Sigmoid colon (tissue), 7 donors: ENCODE measurements at regions of chr3 and their contacts with region 1.

Region 1: DNA sequence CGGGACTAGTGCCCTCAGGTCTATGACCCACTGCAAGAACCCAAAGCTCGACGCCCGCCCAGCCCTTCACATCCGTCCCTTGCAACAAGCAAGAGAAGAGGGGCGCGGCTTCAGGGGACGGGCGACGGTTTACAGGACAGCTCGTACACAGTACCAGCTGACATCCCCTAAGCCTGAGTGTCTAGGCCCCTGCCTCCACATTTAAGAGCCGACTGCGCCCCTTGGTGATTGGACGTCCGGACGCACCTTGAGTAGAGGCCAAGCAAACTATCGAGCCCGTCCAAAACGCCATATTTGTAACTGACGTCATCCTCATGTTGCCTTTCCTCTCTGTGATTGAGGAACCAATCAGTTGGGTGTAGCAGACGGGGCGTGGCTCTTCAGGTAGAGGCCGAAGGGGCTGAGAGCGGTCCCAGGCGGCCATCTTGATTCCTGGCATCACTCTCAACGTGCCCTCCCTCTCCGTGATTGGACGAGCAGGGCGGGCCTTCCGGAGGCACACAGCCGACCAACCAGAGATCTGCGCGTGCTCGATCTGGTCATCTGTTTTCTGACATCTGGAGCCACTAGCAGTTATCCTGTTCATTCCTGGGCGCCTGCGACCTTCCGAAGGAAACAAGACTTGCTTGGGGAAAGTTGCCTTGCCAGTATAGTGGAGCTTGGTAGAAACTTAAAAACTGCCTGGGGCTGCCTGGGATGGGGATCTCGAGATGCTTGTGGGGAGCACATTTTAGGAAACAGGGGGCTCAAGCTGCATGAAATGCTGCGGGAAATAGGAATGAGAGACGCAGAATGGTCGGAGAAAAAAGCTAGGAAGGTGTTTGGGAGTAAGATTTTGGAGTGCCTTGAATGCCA is 4.0 kb upstream of the RPL14 start:
- DNase-seq: peak; percentile 99
- H3K4me3 ChIP-seq: peak overlapping the region; percentile 39 to 76 (median 54)
- H3K27ac ChIP-seq: peak overlapping the region; percentile 80 to 92 (median 88)
- H3K4me1 ChIP-seq: peaks cover 0 to 30% (median 25%) of the 10 kb centered on the region in 4 donors
- H3K27me3 ChIP-seq: no peaks in the 10 kb centered on the region
- CTCF ChIP-seq: no peak
- EP300 ChIP-seq: peak in 1 of 4 donors; percentile 37
- POLR2A ChIP-seq: peak; percentile 35 to 50

Region 2: DNA sequence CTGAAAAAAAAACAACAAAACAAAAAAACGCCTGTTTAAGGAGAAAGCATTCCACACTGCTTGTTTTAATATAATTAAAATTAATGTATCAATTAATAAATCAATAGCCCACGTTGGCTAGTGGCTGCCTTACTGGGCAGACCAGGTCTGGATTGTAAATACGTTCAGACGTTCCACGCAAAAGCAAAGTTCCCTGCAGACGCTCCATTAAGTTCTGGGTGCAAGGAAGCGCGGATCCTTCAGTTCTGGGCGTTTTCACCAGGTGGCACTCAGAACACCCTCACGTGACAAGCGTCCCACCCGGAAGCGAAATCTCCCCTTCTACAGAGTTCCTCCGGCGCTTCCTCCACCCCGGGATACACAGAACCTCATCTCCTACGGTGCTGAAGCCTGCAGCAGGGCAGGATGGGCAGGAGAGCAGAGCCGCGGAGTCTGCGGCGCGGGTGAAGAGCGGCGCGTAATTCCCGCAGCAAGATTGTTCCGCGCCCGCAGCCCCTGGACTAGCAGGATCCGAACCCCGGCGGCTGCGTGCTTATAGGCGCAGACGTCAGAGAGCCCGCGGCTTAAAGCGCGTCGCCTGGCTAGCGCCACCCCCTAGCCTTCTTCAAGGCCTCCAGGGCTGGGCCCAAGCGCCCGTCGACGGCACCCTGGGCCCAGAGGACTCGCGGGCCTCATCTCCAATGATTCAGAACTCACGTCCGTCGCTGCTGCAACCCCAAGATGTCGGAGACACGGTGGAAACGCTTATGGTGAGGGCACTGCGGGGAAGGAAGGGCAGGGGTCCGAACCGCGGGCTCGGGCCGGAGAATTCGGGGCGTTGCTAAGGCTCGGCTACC is 1069.8 kb before region 1 on chr3 and contains the start of gene SLC25A38:
- intact Hi-C with region 1: loop called (anchors 10 kb)
- DNase-seq: peak; percentile 91
- H3K4me3 ChIP-seq: peak within 1 kb of the TSS; percentile 62 to 90 (median 74)
- H3K27ac ChIP-seq: peak within 1 kb of the TSS; percentile 91 to 98 (median 94)
- H3K4me1 ChIP-seq: peaks cover 0 to 24% (median 21%) of the 10 kb centered on the region in 4 donors
- H3K27me3 ChIP-seq: no peaks in the 10 kb centered on the region
- CTCF ChIP-seq: peak in 2 of 4 experiments; percentile 26 to 33
- EP300 ChIP-seq: no peak
- POLR2A ChIP-seq: peak; percentile 11 to 59
- total RNA-seq, gene SLC25A38: 25.8 to 32.6 (median 27.5) TPM

Region 3: GRCh38 chr3:39870706-39871105 is 582.4 kb before region 1 on chr3:
- intact Hi-C with region 1: no loop called
- DNase-seq: no peak
- H3K4me3 ChIP-seq: no peak overlapping the region
- H3K27ac ChIP-seq: no peak overlapping the region
- H3K4me1 ChIP-seq: no peaks in the 10 kb centered on the region
- H3K27me3 ChIP-seq: no peaks in the 10 kb centered on the region
- CTCF ChIP-seq: no peak
- EP300 ChIP-seq: no peak
- POLR2A ChIP-seq: no peak

Region 4: GRCh38 chr3:40505599-40506462 is 52.7 kb after region 1 on chr3 and contains the start of gene ZNF620:
- intact Hi-C with region 1: loop called (anchors 5 kb)
- DNase-seq: peak; percentile 91
- H3K4me3 ChIP-seq: peak within 1 kb of the TSS; percentile 56 to 72 (median 66)
- H3K27ac ChIP-seq: peak within 1 kb of the TSS; percentile 78 to 80 (median 78)
- H3K4me1 ChIP-seq: peaks cover 0 to 12% (median 4%) of the 10 kb centered on the region in 4 donors
- H3K27me3 ChIP-seq: no peaks in the 10 kb centered on the region
- CTCF ChIP-seq: no peak
- EP300 ChIP-seq: no peak
- POLR2A ChIP-seq: peak; percentile 25 to 33
- total RNA-seq, gene ZNF620: 1.4 to 7.3 (median 4.1) TPM

Region 5: DNA sequence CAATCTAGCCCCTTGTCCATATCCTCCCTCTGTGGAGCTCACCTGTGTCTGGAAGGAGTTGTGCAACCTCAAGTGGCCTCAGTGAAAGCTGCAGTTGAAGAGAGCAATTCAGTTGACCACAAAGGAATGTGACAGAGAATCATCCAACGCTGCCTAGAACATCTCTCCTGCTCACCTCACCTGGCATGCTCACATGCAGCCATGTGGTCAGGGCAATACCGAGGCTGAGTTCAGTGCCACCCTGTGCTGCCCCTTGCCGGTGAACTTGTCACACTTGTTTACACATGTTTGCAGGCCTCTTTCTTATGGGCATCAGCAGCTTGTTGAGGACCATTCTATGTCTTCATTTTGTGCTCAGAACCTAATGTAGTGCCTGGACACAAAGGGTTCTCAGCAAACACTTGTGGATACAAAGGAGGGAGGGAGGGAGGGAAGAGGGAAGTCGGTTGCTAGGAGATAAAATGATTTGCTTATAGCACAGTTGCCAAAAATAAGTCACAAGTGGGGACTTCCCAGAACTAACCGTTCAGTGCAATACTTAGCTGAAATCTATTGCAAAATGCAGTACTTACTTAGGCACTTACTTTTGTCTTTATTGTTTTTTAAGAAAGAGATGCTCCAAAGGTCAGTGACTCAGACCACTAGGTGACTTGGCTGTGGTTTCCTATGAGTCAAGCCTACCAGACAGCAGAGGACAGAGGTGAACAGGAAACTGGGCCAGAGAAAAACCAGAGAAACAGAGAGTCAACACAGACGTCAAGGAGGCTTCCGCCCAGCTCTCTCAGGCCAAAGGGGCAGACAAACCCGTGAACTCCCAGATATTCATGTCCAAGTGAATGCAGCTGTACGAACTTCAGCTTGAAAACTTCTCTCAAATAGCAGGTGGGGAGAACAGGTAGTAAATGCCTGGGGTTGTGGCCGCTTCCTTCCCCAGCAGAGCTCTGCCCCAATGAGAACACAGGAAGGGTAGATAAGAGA is 518.4 kb after region 1 on chr3:
- intact Hi-C with region 1: no loop called
- DNase-seq: peak; percentile 93
- H3K4me3 ChIP-seq: no peak overlapping the region
- H3K27ac ChIP-seq: peak overlapping the region; percentile 53 to 76 (median 70)
- H3K4me1 ChIP-seq: peaks cover 0 to 45% (median 39%) of the 10 kb centered on the region in 4 donors
- H3K27me3 ChIP-seq: no peaks in the 10 kb centered on the region
- CTCF ChIP-seq: no peak
- EP300 ChIP-seq: peak; percentile 31 to 83 (median 69)
- POLR2A ChIP-seq: no peak

Region 6: DNA sequence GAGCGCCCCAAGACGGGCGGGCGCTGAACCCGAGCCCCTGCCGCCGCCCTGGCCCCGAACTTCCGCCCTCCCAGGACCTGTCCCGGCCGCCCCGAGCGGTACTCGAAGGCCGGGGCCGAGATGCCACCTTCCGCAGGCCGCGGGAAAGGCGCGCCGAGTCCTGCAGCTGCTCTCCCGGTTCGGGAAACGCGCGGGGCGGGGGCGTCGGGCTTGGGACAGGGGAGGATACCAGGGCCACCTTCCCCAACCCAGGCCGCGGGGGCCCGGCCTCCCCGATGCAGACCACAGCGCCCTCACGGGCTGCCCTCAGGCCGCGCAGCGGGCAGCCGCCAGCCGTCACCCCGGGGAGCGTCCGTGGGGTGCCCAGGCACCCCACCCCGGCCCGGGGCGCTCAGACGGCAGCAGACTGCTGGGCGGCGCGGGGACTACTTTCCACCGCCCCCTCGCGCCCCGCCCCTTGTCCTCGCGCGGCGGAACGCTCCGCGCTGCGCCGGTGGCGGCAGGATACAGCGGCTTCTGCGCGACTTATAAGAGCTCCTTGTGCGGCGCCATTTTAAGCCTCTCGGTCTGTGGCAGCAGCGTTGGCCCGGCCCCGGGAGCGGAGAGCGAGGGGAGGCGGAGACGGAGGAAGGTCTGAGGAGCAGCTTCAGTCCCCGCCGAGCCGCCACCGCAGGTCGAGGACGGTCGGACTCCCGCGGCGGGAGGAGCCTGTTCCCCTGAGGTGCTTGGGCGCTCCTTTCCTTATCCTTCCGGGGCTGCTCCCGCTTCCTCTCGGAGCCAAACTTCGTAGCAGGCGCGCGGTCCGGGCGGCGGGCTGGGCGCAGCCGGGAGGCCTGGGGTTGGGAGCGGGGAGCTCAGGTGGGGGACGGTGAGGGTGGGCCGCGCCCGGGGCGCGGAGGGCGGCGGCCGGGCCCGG is 746.1 kb after region 1 on chr3 and contains the start of gene CTNNB1:
- intact Hi-C with region 1: loop called (anchors 5 kb)
- DNase-seq: peak; percentile 96
- H3K4me3 ChIP-seq: peak within 1 kb of the TSS; percentile 70 to 97 (median 90)
- H3K27ac ChIP-seq: peak within 1 kb of the TSS; percentile 96 to 99 (median 98)
- H3K4me1 ChIP-seq: peaks cover 2 to 43% (median 26%) of the 10 kb centered on the region in 4 donors
- H3K27me3 ChIP-seq: no peaks in the 10 kb centered on the region
- CTCF ChIP-seq: peak in 1 of 4 experiments; percentile 9
- EP300 ChIP-seq: no peak
- POLR2A ChIP-seq: peak; percentile 98
- total RNA-seq, gene CTNNB1: 362 to 495 (median 404) TPM

Region 7: GRCh38 chr3:42071904-42072592 is 1618.9 kb after region 1 on chr3:
- intact Hi-C with region 1: loop called (anchors 10 kb)
- DNase-seq: peak; percentile 96
- H3K4me3 ChIP-seq: peak overlapping the region in 3 of 4 donors; percentile 19 to 30 (median 27)
- H3K27ac ChIP-seq: peak overlapping the region; percentile 76 to 93 (median 87)
- H3K4me1 ChIP-seq: peaks cover 0 to 84% (median 76%) of the 10 kb centered on the region in 4 donors
- H3K27me3 ChIP-seq: no peaks in the 10 kb centered on the region
- CTCF ChIP-seq: no peak
- EP300 ChIP-seq: peak in 3 of 4 donors; percentile 40 to 51 (median 48)
- POLR2A ChIP-seq: no peak